A549 (cell line): ENCODE measurements at regions of chr19 and their contacts with region 1.

Region 1: GRCh38 chr19:46299004-46299509 is 2.2 kb downstream of the HIF3A start:
- DNase-seq: peak; percentile 90 to 95
- ATAC-seq: peak; percentile 60 to 73
- H3K4me3 ChIP-seq: 0 out of 3 replicates have a peak overlapping the region, but pooled peaks have one; percentile 15
- H3K27ac ChIP-seq: peak overlapping the region; percentile 67 to 76
- H3K4me1 ChIP-seq: peaks cover 34% of the 10 kb centered on the region
- CTCF ChIP-seq: no peak
- EP300 ChIP-seq: no peak
- POLR2A ChIP-seq: no peak
- RAD21 ChIP-seq: no peak

Region 2: DNA sequence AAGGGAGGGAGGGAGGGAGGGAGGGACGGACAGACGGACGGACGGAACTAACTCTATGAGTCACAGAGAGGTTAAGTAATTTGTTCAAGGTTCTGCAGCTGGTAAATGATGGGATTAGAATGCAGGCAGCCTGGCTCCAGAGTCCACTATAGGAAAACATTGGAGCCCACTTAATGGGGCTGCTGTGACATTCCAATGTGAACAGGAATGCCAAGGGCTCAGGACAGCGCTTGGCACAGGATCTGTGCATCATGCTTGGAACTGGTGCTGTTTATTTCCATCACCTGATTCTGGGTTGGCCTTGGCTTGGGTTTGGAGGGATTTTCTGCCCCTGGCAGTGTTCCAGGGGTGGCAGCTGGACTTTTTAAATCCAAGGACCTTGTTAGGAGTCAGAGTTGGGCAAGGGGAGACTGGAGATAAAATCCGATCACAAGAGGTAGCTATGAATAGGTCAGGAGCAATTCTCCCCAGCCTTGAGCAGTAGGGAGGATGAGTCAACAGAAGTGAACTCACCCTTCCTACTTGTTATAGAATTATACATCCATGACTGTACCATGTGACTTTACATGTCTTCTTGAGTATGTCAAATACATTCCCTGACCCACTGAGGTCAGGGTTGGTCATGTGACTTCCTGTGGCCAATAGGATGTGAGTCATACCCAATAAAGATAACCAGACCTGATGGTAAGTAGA is 10.0 kb before region 1 on chr19:
- CTCF ChIA-PET with region 1: interaction called, 13 read pairs
- POLR2A ChIA-PET with region 1: interaction called, 5 read pairs
- DNase-seq: peak; percentile 73 to 74
- ATAC-seq: peak; percentile 87 to 88
- H3K4me3 ChIP-seq: no peak overlapping the region
- H3K27ac ChIP-seq: peak overlapping the region; percentile 61 to 68
- H3K4me1 ChIP-seq: peaks cover 11% of the 10 kb centered on the region
- CTCF ChIP-seq: no peak
- EP300 ChIP-seq: no peak
- POLR2A ChIP-seq: no peak
- RAD21 ChIP-seq: no peak

Region 3: GRCh38 chr19:46442808-46443450 is 143.9 kb after region 1 on chr19:
- CTCF ChIA-PET with region 1: no interaction called
- POLR2A ChIA-PET with region 1: no interaction called
- DNase-seq: peak; percentile 60 to 61
- ATAC-seq: peak; percentile 83 to 90
- H3K4me3 ChIP-seq: no peak overlapping the region
- H3K27ac ChIP-seq: peak overlapping the region; percentile 64 to 65
- H3K4me1 ChIP-seq: peaks cover 13% of the 10 kb centered on the region
- CTCF ChIP-seq: no peak
- EP300 ChIP-seq: no peak
- POLR2A ChIP-seq: no peak
- RAD21 ChIP-seq: no peak